ENCODE measurements at regions of chr20 and their contacts with region 1.

Region 1: DNA sequence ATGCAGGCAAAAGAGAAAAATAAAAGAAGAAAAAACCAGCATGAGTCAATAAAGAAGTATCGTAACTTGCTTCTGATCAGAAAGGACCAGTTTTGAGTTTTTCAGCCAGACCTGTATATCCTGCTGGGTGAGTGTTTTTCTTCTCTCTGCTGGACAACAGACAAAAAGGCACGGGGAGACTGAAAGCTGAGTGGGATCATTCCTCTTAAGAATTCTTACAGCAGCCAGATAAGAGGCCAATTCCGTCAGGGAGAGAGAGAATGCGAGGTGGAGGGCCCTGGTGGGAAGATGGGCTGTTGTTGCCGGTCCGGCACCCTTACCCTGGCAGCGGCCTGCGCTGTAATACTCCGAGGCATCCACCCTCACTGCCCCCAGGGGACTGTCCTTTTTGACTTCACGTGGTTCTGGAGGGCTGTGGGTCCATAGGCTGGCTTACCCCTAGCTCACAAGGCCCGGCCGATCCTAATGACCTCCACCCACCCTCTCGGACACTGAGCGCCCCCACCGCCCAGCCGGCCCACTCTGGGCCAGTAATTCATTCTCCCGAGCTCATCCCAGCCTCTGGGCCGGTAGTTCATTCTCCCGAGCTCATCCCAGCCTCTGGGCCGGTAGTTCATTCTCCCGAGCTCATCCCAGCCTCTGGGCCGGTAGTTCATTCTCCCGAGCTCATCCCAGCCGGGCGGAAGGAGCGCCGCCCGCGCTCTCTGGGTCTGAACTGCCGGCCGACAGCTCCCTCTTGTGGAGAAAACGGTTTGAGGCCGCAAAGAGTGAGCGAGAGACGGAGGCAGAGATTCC is 118.3 kb upstream of the SIRPA start:
- DNase-seq: peak; percentile 86
- ATAC-seq: peak; percentile 93
- H3K4me3 Mint-ChIP-seq: peak overlapping the region; percentile 77
- H3K27ac Mint-ChIP-seq: no peak overlapping the region
- H3K4me1 Mint-ChIP-seq: peaks cover 12% of the 10 kb centered on the region
- H3K27me3 Mint-ChIP-seq: peaks cover 13% of the 10 kb centered on the region

Region 2: DNA sequence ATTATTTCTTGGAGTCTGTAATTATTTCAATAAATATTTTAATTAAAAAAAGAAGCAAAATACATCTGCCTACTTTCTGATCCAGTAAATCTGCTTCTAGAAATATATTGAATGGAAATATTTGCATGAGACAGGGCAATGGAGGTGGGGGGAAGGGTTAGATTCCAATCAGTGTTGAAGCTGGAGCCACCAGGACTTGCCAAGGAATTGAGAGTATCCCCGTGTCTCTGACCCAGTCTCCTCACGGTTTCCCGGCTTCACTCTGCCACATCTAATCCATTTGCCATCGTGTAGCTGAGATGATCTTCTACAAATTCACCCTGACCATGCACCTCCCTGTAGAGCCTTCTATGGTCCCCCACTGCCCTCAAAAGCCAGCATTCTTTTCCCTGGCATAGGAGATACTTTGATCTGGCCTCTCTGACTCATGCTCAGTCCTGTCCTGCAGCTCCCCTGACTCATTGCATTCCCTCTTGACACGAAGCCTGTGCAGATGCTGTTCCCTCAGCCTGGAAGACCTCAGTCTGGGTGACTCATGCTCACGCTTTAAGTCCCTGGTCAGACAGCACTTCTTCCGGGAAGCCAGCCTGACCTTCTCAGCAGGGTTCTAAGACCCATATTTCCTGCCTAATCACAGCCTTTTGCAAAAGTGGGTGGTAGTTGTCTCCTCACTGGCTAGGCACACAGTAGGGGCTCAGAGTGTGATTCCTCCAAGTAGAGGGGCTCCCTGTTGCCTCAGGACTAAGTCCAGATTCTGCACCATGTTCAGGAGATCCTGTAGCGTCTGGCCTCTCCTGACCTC is 361.0 kb before region 1 on chr20:
- CTCF ChIA-PET with region 1: no interaction called
- POLR2A ChIA-PET with region 1: no interaction called
- DNase-seq: no peak
- ATAC-seq: no peak
- H3K4me3 Mint-ChIP-seq: no peak overlapping the region
- H3K27ac Mint-ChIP-seq: no peak overlapping the region
- H3K4me1 Mint-ChIP-seq: peaks cover 11% of the 10 kb centered on the region
- H3K27me3 Mint-ChIP-seq: peaks cover 26% of the 10 kb centered on the region

Region 3: DNA sequence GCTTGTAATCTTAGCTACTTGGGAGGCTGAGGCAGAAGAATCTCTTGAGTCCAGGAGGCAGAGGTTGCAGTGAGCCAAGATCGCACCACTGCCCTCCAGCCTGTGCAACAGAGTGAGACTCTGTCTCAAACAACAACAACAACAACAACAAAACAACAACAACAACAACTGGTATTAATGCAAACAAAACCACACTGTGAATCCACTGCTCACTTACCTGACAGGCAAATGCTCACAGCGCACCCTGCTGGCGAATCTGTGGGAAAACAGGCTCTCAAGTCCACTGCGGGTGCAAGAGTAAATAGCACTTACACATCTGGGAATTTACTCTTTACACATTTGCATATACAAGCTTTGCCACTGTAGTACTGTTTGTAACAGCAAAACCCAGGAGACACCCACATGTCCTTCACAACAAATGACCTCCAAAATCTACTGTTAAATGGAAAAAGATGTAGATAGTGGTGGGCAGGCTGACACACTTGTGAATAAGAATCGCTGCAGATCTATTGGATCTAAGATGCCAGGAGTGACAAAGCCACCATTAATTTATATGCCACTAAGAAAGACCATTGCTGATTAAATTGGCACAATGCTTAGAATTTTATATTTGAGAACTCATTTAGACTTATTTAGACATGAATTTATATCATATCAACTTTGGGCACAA is 339.5 kb before region 1 on chr20:
- CTCF ChIA-PET with region 1: interaction called, 10 read pairs
- POLR2A ChIA-PET with region 1: no interaction called
- DNase-seq: peak; percentile 87
- ATAC-seq: no peak
- H3K4me3 Mint-ChIP-seq: no peak overlapping the region
- H3K27ac Mint-ChIP-seq: no peak overlapping the region
- H3K4me1 Mint-ChIP-seq: peaks cover 39% of the 10 kb centered on the region
- H3K27me3 Mint-ChIP-seq: peaks cover 20% of the 10 kb centered on the region

Region 4: GRCh38 chr20:1509237-1509636 is 267.6 kb before region 1 on chr20:
- CTCF ChIA-PET with region 1: interaction called, 59 read pairs
- POLR2A ChIA-PET with region 1: interaction called, 4 read pairs
- DNase-seq: peak; percentile 62
- ATAC-seq: peak; percentile 51
- H3K4me3 Mint-ChIP-seq: no peak overlapping the region
- H3K27ac Mint-ChIP-seq: no peak overlapping the region
- H3K4me1 Mint-ChIP-seq: no peaks in the 10 kb centered on the region
- H3K27me3 Mint-ChIP-seq: peaks cover 32% of the 10 kb centered on the region

Region 5: GRCh38 chr20:1555952-1556351 is 220.9 kb before region 1 on chr20:
- CTCF ChIA-PET with region 1: interaction called, 16 read pairs
- POLR2A ChIA-PET with region 1: no interaction called
- DNase-seq: no peak
- ATAC-seq: no peak
- H3K4me3 Mint-ChIP-seq: no peak overlapping the region
- H3K27ac Mint-ChIP-seq: no peak overlapping the region
- H3K4me1 Mint-ChIP-seq: peaks cover 4% of the 10 kb centered on the region
- H3K27me3 Mint-ChIP-seq: no peaks in the 10 kb centered on the region

Region 6: DNA sequence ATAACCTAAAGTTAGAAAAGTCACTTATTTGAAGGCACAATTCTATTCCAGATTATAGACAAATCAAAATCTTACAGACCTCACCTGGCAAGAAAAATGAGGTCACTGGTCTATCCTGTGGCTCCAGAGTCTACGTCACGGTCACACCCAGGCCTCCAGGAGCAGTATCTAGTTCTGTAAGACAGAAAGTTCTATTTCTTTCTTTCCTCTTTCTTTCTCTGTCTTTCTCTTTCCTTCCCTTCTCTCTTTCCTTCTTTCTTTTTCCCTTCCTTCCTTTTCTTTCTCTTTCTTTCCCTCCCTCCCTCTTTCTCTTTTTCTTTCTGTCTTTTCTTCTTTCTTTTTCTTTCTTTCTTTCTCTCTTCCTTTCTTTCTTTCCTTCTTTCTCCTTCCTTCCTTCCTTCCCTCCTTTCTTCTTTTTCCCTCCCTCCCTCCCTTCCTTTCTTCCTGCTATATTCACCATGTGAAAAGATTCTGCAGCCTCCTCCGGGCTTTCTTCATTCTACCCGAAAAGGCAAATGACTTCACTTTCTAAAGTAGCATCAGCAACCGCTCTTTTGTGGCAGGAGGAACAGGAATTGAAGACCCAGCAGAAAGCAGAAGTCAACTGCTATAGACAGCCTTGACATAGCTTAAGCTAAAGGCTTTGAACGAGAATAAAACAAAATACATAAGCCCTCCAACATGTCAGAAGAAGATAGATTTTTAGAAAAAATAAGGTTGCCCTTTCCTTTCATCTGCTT is 35.4 kb before region 1 on chr20:
- CTCF ChIA-PET with region 1: interaction called, 13 read pairs
- POLR2A ChIA-PET with region 1: no interaction called
- DNase-seq: no peak
- ATAC-seq: no peak
- H3K4me3 Mint-ChIP-seq: no peak overlapping the region
- H3K27ac Mint-ChIP-seq: no peak overlapping the region
- H3K4me1 Mint-ChIP-seq: peaks cover 3% of the 10 kb centered on the region
- H3K27me3 Mint-ChIP-seq: peaks cover 9% of the 10 kb centered on the region

Region 7: DNA sequence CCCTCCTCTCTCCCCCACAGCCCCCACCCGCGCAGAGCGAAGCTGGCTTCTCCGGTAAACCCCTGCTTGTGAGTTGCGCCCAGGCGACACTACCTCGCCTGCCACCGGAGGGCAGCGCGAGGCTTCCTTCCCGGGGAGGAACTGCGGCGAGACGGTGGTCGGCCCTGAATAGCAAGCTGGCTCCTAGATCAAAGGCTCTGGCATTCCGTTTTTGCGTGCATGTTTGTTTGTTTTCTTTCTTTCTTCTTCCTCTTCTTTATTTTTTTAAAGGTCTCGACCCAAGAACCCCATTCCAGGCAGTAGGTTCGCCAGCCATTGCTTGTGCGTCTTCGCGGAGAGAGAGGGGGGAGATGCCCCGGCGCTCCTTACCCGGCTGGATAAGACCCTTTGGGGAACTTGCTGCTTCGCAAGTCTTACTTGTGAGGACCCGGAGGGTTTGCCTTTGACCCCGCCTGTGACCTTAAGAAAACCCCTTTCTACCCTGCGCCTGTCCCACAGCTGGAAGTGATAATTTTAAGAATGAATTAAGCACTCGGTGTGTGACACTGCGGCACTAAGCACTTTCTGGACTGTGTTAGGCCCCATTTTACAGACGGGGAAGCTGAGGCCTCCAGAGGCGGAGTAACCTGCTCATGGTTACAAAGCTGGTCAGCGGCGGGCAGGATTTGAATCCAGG is 25.6 kb after region 1 on chr20:
- CTCF ChIA-PET with region 1: interaction called, 19 read pairs
- POLR2A ChIA-PET with region 1: no interaction called
- DNase-seq: peak; percentile 65
- ATAC-seq: peak; percentile 71
- H3K4me3 Mint-ChIP-seq: peak overlapping the region; percentile 37
- H3K27ac Mint-ChIP-seq: no peak overlapping the region
- H3K4me1 Mint-ChIP-seq: peaks cover 9% of the 10 kb centered on the region
- H3K27me3 Mint-ChIP-seq: peaks cover 60% of the 10 kb centered on the region

Region 8: GRCh38 chr20:1987826-1988225 is 210.9 kb after region 1 on chr20:
- CTCF ChIA-PET with region 1: no interaction called
- POLR2A ChIA-PET with region 1: no interaction called
- DNase-seq: no peak
- ATAC-seq: no peak
- H3K4me3 Mint-ChIP-seq: no peak overlapping the region
- H3K27ac Mint-ChIP-seq: no peak overlapping the region
- H3K4me1 Mint-ChIP-seq: no peaks in the 10 kb centered on the region
- H3K27me3 Mint-ChIP-seq: peaks cover 18% of the 10 kb centered on the region